ENCODE measurements at regions of chr19 and their contacts with region 1.

Region 1: DNA sequence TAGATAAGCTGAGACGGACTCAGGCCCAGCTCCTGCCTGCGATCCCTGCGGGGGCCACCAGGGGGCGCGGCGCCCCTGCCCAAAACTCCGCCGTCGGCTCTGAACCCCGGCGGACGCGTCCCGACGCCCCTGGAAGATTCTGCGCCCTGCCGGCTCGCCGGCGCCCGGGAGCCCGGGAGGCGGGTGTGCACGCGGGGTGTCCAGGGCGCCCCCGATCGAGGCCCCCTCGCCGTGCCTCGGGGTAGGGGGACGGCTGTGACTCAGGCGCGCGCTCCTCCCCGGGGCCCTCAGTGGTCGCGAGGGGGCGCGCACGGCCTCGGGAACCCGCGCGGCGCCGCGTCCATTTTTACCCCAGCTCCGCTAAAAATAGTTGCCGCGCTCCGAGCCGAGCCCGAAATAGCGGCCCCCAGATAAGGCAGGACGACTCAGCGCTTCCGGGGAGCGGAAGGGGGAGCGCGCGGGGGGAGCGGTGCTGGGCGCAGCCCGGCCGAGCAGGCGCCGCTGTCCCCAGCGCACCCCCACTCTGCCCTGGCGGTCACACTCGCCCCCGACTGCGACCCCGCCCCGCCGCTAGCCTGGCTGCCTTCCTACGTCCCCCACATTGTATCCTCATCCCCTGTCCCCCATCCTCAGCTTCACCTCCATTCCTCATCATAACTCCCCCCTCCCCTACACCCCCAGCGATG is 16.0 kb upstream of the ERCC1 start:
- DNase-seq: peak; percentile 92 to 93
- ATAC-seq: peak; percentile 67 to 82 (median 72)
- H3K4me3 ChIP-seq: peak overlapping the region; percentile 22
- H3K4me3 Mint-ChIP-seq: peak overlapping the region; percentile 81
- H3K27ac ChIP-seq: peak overlapping the region; percentile 70
- H3K27ac Mint-ChIP-seq: peak overlapping the region; percentile 86 to 92
- H3K4me1 ChIP-seq: peaks cover 43% of the 10 kb centered on the region
- H3K4me1 Mint-ChIP-seq: peaks cover 23 to 38% of the 10 kb centered on the region in 2 donors
- H3K27me3 ChIP-seq: no peaks in the 10 kb centered on the region
- H3K27me3 Mint-ChIP-seq: no peaks in the 10 kb centered on the region
- CTCF ChIP-seq: peak; percentile 100

Region 2: DNA sequence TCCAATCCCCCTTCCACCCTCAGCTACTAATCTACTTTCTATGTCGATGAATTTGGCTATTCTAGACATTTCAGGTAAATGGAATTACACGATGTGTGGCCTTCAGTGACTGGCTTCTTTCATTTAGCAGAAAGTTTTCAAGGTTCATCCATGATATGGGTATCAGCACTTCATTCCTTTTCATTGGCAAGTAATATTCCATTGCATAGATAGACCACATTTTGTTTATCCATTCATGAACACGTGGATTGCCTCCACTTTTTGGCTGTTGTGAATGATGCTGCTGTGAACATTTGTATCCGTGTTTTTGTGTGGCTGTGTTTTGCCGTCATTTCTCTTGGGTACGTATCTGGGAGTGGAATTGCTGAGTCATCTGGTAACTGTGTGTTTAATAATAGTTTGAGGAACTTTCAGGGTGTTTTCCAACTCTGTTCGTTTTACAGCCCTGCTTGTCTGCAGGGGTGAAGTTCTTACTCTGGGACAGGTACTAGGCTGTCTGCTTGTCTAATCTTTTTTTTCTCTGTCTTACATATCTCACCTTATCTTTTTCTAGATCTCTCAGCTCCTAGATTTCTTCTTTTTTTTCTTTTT is 156.2 kb before region 1 on chr19:
- intact Hi-C with region 1: no loop called
- DNase-seq: no peak
- ATAC-seq: peak in 1 of 3 donors; percentile 37
- H3K4me3 ChIP-seq: no peak overlapping the region
- H3K4me3 Mint-ChIP-seq: no peak overlapping the region
- H3K27ac ChIP-seq: no peak overlapping the region
- H3K27ac Mint-ChIP-seq: no peak overlapping the region
- H3K4me1 ChIP-seq: no peaks in the 10 kb centered on the region
- H3K4me1 Mint-ChIP-seq: no peaks in the 10 kb centered on the region
- H3K27me3 ChIP-seq: no peaks in the 10 kb centered on the region
- H3K27me3 Mint-ChIP-seq: no peaks in the 10 kb centered on the region
- CTCF ChIP-seq: no peak

Region 3: DNA sequence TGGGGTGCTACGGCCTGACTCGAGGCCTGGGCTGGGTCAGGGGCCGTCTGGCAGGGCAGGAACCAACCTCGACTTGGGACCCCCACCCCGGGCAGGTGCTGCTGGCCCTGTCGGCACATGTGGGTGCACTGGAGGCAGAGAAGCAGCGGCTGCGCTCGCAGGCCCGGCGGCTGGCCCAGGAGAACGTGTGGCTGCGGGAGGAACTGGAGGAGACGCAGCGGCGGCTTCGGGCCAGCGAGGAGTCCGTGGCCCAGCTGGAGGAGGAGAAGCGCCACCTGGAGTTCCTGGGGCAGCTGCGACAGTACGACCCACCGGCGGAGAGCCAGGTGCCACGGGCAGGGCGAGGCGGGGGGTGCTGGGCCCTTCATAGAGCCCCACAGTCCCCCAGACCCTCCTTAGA is 93.3 kb before region 1 on chr19:
- intact Hi-C with region 1: no loop called
- DNase-seq: no peak
- ATAC-seq: no peak
- H3K4me3 ChIP-seq: no peak overlapping the region
- H3K4me3 Mint-ChIP-seq: no peak overlapping the region
- H3K27ac ChIP-seq: no peak overlapping the region
- H3K27ac Mint-ChIP-seq: no peak overlapping the region
- H3K4me1 ChIP-seq: no peaks in the 10 kb centered on the region
- H3K4me1 Mint-ChIP-seq: no peaks in the 10 kb centered on the region
- H3K27me3 ChIP-seq: peaks cover 3% of the 10 kb centered on the region
- H3K27me3 Mint-ChIP-seq: peaks cover 0 to 5% of the 10 kb centered on the region in 2 donors
- CTCF ChIP-seq: no peak

Region 4: DNA sequence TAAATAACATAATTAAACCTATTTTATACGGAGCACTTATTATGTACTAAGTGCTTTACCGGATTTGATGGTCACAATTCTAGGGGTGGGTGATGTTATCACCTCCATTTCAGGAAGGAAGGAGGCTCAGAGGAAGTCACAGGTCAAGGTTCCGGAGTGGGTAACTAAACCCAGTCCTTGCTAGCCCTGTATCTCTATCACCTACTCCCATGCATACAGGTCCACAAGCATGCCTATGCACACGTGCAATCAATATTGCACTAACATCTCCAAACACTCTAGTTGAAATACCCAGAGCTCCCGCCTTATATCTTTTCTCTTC is 10.3 kb after region 1 on chr19:
- intact Hi-C with region 1: loop called (anchors 1 kb)
- DNase-seq: peak in 1 of 2 donors; percentile 81
- ATAC-seq: peak; percentile 52 to 78 (median 62)
- H3K4me3 ChIP-seq: peak overlapping the region; percentile 48
- H3K4me3 Mint-ChIP-seq: peak overlapping the region; percentile 98
- H3K27ac ChIP-seq: peak overlapping the region; percentile 93
- H3K27ac Mint-ChIP-seq: peak overlapping the region; percentile 99 to 100
- H3K4me1 ChIP-seq: peaks cover 63% of the 10 kb centered on the region
- H3K4me1 Mint-ChIP-seq: peaks cover 65 to 74% of the 10 kb centered on the region in 2 donors
- H3K27me3 ChIP-seq: no peaks in the 10 kb centered on the region
- H3K27me3 Mint-ChIP-seq: no peaks in the 10 kb centered on the region
- CTCF ChIP-seq: no peak

Region 5: GRCh38 chr19:45478454-45479238 is 38.9 kb after region 1 on chr19:
- intact Hi-C with region 1: loop called (anchors 1 kb)
- DNase-seq: peak; percentile 88 to 96
- ATAC-seq: peak; percentile 58 to 84 (median 67)
- H3K4me3 ChIP-seq: peak overlapping the region; percentile 60
- H3K4me3 Mint-ChIP-seq: peak overlapping the region; percentile 74
- H3K27ac ChIP-seq: peak overlapping the region; percentile 89
- H3K27ac Mint-ChIP-seq: peak overlapping the region; percentile 87 to 90
- H3K4me1 ChIP-seq: peaks cover 30% of the 10 kb centered on the region
- H3K4me1 Mint-ChIP-seq: peaks cover 42 to 55% of the 10 kb centered on the region in 2 donors
- H3K27me3 ChIP-seq: no peaks in the 10 kb centered on the region
- H3K27me3 Mint-ChIP-seq: peaks cover 0 to 10% of the 10 kb centered on the region in 2 donors
- CTCF ChIP-seq: peak; percentile 76

Measured in natural killer cell (primary cell).